ENCODE measurements at regions of chr15 and their contacts with region 1.

Region 1: GRCh38 chr15:92714477-92715401 is 59.2 kb upstream of the FAM174B start:
- DNase-seq: peak; percentile 79 to 91
- ATAC-seq: peak; percentile 95
- H3K4me3 ChIP-seq: peak overlapping the region; percentile 24 to 56
- H3K27ac ChIP-seq: peak overlapping the region in 1 of 2 donors; percentile 8
- H3K4me1 ChIP-seq: no peaks in the 10 kb centered on the region
- H3K27me3 ChIP-seq: no peaks in the 10 kb centered on the region

Region 2: GRCh38 chr15:92521624-92522008 is 193.1 kb before region 1 on chr15:
- intact Hi-C with region 1: loop called (anchors 1 kb)
- DNase-seq: peak; percentile 83 to 86
- ATAC-seq: peak; percentile 93
- H3K4me3 ChIP-seq: no peak overlapping the region
- H3K27ac ChIP-seq: no peak overlapping the region
- H3K4me1 ChIP-seq: no peaks in the 10 kb centered on the region
- H3K27me3 ChIP-seq: peaks cover 0 to 2% of the 10 kb centered on the region in 2 donors

Region 3: DNA sequence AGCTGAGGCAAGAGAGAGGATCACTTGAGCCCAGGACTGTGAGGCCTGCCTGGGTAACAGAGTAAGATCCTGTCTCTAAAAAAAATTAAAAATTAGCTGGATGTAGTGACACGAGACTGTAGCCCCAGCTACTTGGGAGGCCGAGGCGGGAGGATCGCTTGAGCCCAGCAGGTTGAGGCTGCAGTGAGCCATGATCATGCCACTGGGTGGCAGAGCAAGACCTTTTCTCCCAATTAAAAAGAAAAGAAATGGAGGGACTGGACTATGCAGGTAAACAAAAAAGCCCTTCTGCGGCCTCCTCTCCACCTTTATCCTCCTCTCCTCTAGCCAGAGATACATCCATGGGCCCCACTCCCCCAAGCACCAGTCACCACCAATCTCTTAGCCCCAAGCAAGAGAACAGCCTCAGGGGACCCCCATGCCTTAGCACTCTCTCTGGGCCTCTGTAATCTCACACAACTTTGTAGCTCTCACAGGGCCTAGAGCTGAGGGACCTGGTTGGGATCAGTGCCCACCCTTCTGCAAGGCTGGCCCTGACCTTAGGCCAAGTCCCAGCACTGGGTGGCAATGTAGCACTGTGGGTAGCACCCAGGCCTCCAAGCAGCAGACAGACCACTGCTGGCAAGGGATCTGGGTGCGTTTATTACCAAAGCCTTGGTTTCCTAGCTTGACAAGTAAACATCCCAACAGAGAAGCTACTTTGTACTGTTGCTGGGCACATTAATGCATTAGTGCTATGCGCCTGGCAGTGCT is 102.6 kb before region 1 on chr15:
- intact Hi-C with region 1: loop called (anchors 5 to 10 kb)
- DNase-seq: no peak
- ATAC-seq: no peak
- H3K4me3 ChIP-seq: no peak overlapping the region
- H3K27ac ChIP-seq: no peak overlapping the region
- H3K4me1 ChIP-seq: no peaks in the 10 kb centered on the region
- H3K27me3 ChIP-seq: no peaks in the 10 kb centered on the region

Region 4: GRCh38 chr15:92617549-92618520 is 96.9 kb before region 1 on chr15:
- intact Hi-C with region 1: loop called (anchors 5 to 10 kb)
- DNase-seq: peak in 1 of 2 donors; percentile 59
- ATAC-seq: no peak
- H3K4me3 ChIP-seq: no peak overlapping the region
- H3K27ac ChIP-seq: no peak overlapping the region
- H3K4me1 ChIP-seq: peaks cover 0 to 2% of the 10 kb centered on the region in 2 donors
- H3K27me3 ChIP-seq: no peaks in the 10 kb centered on the region

Region 5: GRCh38 chr15:92733090-92733933 is 18.6 kb after region 1 on chr15:
- intact Hi-C with region 1: no loop called
- DNase-seq: no peak
- ATAC-seq: no peak
- H3K4me3 ChIP-seq: peak overlapping the region in 1 of 2 donors; percentile 66
- H3K27ac ChIP-seq: peak overlapping the region in 1 of 2 donors; percentile 74
- H3K4me1 ChIP-seq: no peaks in the 10 kb centered on the region
- H3K27me3 ChIP-seq: no peaks in the 10 kb centered on the region